GM12878 (cell line): ENCODE measurements at regions of chr2 and their contacts with region 1.

Region 1: DNA sequence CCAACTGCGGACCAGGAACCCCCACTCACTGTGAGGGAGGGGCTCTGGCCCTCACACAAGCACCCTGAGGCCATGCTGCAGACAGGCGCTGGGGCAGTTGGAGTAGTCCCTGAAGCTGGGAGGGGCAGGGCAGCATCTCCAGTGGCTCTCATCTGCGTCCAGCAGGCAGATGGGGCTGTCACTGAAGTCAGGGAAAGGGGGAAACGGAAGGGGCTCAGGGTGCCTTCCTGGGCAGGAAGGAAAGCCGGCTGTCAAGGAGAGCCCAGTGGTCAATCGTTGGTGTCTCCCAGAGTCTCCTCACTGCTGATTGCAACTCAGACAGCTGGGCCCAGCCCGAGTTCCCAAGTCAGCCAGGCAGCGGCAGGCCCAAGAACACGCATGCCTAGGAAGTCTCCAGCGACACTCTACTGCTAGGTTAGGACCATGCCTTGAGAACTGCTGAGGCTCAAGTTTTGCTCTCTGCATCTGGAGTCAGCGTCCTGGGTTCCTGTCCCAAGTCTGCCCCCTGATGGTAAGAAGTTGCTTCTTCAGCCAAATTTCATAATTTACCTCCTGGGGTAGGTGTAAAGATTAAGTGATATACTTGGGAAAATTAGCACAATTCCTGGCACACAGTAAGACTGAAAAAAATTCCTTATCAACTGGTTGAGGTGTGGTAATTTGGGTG is 27.5 kb upstream of the NMUR1 start:
- DNase-seq: peak; percentile 49
- ATAC-seq: peak; percentile 95
- H3K4me3 ChIP-seq: no peak overlapping the region
- H3K27ac ChIP-seq: no peak overlapping the region
- H3K4me1 ChIP-seq: peaks cover 20% of the 10 kb centered on the region
- H3K27me3 ChIP-seq: no peaks in the 10 kb centered on the region
- CTCF ChIP-seq: peak; percentile 66 to 87 (median 74)
- EP300 ChIP-seq: no peak
- POLR2A ChIP-seq: no peak
- RAD21 ChIP-seq: peak; percentile 92

Region 2: DNA sequence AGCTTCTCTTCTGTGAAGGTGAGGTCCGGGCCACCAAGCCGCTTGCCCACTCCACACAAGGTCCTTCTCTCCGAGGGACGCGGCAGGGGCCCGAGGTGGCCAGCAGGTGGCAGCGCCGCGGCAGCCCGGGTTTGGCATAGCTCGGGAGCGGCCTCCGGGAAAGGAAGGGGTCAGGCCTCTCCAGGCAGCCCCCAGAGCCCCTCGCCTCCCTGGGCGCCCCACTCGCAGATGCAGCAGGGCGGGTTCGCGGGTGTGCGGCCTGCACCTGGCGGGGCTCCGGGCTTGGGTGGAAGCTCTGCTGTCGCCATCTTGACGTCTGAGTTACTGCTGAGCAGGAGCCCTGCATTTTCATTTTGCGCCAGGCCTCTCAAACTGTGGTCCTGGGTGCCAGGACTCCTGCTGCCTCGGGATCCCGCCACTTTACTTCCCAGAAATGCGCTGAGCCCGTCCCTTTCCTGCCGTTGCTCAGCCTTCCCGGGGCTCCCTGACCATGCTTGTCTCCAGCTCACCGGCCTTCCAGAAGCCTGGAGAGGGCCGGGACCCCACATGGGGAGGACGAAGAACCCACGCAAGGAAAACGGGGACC is 74.8 kb before region 1 on chr2:
- CTCF ChIA-PET with region 1: interaction called, 40 read pairs
- POLR2A ChIA-PET with region 1: interaction called, 3 read pairs
- RAD21 ChIA-PET with region 1: interaction called, 23 read pairs
- SMC1A ChIA-PET with region 1: interaction called, 8 read pairs
- in situ Hi-C with region 1: no loop called
- intact Hi-C with region 1: loop called (anchors 2 kb)
- DNase-seq: no peak
- ATAC-seq: peak; percentile 90
- H3K4me3 ChIP-seq: peak overlapping the region; percentile 79
- H3K27ac ChIP-seq: peak overlapping the region; percentile 93
- H3K4me1 ChIP-seq: peaks cover 15% of the 10 kb centered on the region
- H3K27me3 ChIP-seq: no peaks in the 10 kb centered on the region
- CTCF ChIP-seq: peak; percentile 85 to 95 (median 91)
- EP300 ChIP-seq: no peak
- POLR2A ChIP-seq: peak; percentile 80
- RAD21 ChIP-seq: peak; percentile 48; the same call in 1 of the 2 replicates

Region 3: DNA sequence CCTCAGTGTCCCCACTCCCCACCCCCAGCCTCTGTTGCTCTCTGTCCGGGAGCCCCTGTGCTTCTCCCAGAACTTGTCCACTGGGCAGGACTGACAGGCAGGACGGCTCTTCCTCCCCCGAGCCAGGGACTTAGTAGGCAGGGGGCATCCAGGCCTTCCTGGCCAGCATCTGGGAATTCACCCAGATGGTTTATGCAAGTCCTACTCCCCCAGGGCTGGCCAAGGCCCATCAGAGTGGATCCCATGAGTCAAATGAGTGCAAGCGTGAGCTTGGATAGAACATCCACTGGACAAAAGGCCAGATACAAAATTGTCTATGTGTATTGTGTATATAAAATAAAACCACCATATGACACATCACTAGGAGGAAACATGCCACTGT is 34.9 kb before region 1 on chr2:
- CTCF ChIA-PET with region 1: interaction called, 84 read pairs
- POLR2A ChIA-PET with region 1: no interaction called
- RAD21 ChIA-PET with region 1: interaction called, 8 read pairs
- SMC1A ChIA-PET with region 1: interaction called, 31 read pairs
- in situ Hi-C with region 1: loop called (anchors 5 kb)
- intact Hi-C with region 1: loop called (anchors 1 kb)
- DNase-seq: no peak
- ATAC-seq: no peak
- H3K4me3 ChIP-seq: no peak overlapping the region
- H3K27ac ChIP-seq: no peak overlapping the region
- H3K4me1 ChIP-seq: peaks cover 5% of the 10 kb centered on the region
- H3K27me3 ChIP-seq: no peaks in the 10 kb centered on the region
- CTCF ChIP-seq: no peak
- EP300 ChIP-seq: no peak
- POLR2A ChIP-seq: no peak
- RAD21 ChIP-seq: no peak

Region 4: DNA sequence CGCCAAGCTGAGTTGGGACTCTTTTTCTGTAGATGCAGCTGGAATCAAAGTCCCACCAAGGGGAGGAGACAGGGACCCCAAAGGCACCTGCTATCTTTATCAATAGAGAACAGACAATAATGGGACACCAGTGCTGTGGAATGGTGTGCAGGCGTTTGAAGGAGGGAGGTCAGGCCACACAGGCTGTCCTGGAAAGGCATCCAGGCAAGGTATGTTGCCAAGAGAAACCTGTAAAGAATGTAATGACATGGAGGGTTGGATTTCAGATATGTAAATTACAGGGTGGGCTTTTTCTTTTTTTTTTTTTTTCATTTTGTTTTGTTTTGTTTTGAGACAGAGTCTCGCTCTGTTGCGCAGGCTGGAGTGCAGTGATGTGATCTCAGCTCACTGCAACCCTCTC is 17.7 kb before region 1 on chr2:
- CTCF ChIA-PET with region 1: interaction called, 48 read pairs
- POLR2A ChIA-PET with region 1: interaction called, 9 read pairs
- RAD21 ChIA-PET with region 1: interaction called, 18 read pairs
- SMC1A ChIA-PET with region 1: interaction called, 21 read pairs
- in situ Hi-C with region 1: no loop called
- intact Hi-C with region 1: no loop called
- DNase-seq: no peak
- ATAC-seq: no peak
- H3K4me3 ChIP-seq: no peak overlapping the region
- H3K27ac ChIP-seq: no peak overlapping the region
- H3K4me1 ChIP-seq: peaks cover 4% of the 10 kb centered on the region
- H3K27me3 ChIP-seq: no peaks in the 10 kb centered on the region; a peak in 1 of 4 replicates
- CTCF ChIP-seq: no peak
- EP300 ChIP-seq: no peak
- POLR2A ChIP-seq: no peak
- RAD21 ChIP-seq: no peak

Region 5: GRCh38 chr2:231571661-231572191 is 14.0 kb after region 1 on chr2:
- CTCF ChIA-PET with region 1: interaction called, 15 read pairs
- POLR2A ChIA-PET with region 1: no interaction called
- RAD21 ChIA-PET with region 1: interaction called, 6 read pairs
- SMC1A ChIA-PET with region 1: no interaction called
- in situ Hi-C with region 1: no loop called
- intact Hi-C with region 1: no loop called
- DNase-seq: no peak
- ATAC-seq: no peak
- H3K4me3 ChIP-seq: no peak overlapping the region
- H3K27ac ChIP-seq: no peak overlapping the region
- H3K4me1 ChIP-seq: no peaks in the 10 kb centered on the region; the same call in 1 of the 2 replicates
- H3K27me3 ChIP-seq: no peaks in the 10 kb centered on the region
- CTCF ChIP-seq: no peak
- EP300 ChIP-seq: no peak
- POLR2A ChIP-seq: no peak
- RAD21 ChIP-seq: no peak